Activated CD8-positive, alpha-beta T cell treated with anti-CD3 and anti-CD28 coated beads, Interleukin-2, amount 10 ng/mL, durations not matched to agents 7 days and 5 days (primary cell): ENCODE measurements at regions of chr2 and their contacts with region 1.

Region 1: DNA sequence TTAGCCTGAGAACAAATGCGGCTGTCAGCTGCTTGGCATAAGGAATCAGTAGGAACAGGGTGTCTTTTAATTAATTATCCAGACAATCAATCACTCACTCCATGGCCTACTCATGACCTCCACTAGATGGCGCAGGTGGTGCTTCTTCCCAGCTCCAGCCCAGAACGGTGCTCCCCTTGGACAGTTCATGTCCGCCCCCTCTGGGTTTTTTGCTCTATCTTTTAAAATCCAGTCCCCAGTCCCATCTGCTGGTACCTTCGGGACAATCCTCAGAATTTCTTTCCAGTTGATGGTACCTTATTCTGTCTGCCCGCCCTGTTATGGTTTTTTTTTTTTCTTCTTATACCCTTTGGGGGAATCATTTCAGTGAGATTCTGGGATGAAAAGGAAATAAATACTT is 99.8 kb downstream of the CACNB4 start:
- DNase-seq: peak; percentile 56
- ATAC-seq: peak; percentile 72
- H3K4me3 Mint-ChIP-seq: no peak overlapping the region
- H3K27ac Mint-ChIP-seq: no peak overlapping the region
- H3K4me1 Mint-ChIP-seq: peaks cover under 1% of the 10 kb centered on the region
- H3K27me3 Mint-ChIP-seq: no peaks in the 10 kb centered on the region

Region 2: DNA sequence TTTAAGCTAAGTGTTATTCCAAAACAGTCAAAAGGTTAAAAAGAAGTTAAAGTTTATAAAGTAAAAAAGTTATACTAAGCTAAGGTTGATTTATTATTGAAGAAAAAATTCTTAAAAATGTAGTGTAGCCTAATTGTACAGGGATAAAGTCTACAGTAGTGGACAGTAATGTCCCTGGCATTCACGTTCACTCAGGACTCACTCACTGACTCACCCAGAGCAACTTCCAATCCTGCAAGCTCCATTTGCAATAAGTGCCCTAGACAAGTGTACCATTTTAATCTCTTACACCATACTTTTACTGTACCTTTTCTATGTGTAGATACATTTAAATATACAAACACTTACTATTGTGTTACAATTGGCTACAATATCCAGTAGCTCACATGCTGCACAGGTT is 13.6 kb after region 1 on chr2:
- CTCF ChIA-PET with region 1: interaction called, 11 read pairs
- POLR2A ChIA-PET with region 1: no interaction called
- DNase-seq: no peak
- ATAC-seq: no peak
- H3K4me3 Mint-ChIP-seq: no peak overlapping the region
- H3K27ac Mint-ChIP-seq: no peak overlapping the region
- H3K4me1 Mint-ChIP-seq: no peaks in the 10 kb centered on the region
- H3K27me3 Mint-ChIP-seq: peaks cover 2% of the 10 kb centered on the region